ENCODE measurements at regions of chr12 and their contacts with region 1.

Region 1: DNA sequence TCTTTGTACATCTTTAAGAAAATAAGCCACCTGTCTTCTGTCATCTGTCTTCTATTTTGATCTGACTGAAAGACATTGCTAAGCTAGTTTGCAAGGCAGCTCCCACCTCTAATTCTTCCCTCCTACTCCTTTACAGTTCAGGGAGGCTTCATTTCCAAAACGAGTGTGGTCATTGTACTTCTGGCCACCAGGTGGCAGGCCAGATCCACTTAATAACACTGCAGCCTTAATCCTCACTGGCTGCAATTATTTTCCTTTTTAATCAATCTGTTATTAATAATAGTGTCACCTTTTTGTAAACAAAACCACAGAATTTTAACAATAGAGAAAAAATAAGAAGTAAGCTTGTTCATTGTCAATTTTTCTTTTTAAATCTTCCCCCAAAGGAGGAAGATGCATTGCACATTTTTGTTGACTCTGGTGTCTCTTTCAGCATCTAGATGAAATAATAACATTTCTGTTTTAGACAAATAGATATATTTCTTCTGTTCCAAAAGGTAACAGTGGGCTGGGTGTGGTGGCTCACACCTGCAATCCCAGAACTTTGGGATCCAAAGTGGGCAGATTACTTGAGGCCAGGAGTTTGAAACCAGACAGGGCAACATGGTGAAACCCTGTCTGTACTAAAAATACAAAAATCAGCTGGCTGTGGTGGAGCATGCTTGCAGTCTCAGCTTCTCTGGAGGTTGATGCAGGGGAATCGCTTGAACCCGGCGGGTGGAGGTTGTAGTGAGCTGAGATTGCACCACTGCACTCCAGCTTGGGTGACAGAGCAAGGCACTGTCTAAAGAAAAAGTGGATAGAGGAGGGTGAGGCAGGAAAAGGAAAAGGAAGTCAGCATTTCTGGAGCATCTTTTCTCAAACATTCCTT is 23.3 kb downstream of the GABARAPL1 start:
- DNase-seq: peak; percentile 79
- H3K4me3 ChIP-seq: no peak overlapping the region
- H3K27ac ChIP-seq: peak overlapping the region; percentile 35
- H3K4me1 ChIP-seq: peaks cover under 1% of the 10 kb centered on the region
- CTCF ChIP-seq: peak; percentile 99

Region 2: GRCh38 chr12:8969861-8970412 is 1266.1 kb before region 1 on chr12:
- CTCF ChIA-PET with region 1: no interaction called
- POLR2A ChIA-PET with region 1: no interaction called
- intact Hi-C with region 1: no loop called
- DNase-seq: no peak
- H3K4me3 ChIP-seq: no peak overlapping the region
- H3K27ac ChIP-seq: no peak overlapping the region
- H3K4me1 ChIP-seq: no peaks in the 10 kb centered on the region
- CTCF ChIP-seq: no peak

Region 3: GRCh38 chr12:10331642-10332239 is 95.7 kb after region 1 on chr12:
- CTCF ChIA-PET with region 1: no interaction called
- POLR2A ChIA-PET with region 1: no interaction called
- intact Hi-C with region 1: loop called (anchors 2 kb)
- DNase-seq: peak; percentile 78
- H3K4me3 ChIP-seq: no peak overlapping the region
- H3K27ac ChIP-seq: no peak overlapping the region
- H3K4me1 ChIP-seq: peaks cover 10% of the 10 kb centered on the region
- CTCF ChIP-seq: peak; percentile 96

Region 4: DNA sequence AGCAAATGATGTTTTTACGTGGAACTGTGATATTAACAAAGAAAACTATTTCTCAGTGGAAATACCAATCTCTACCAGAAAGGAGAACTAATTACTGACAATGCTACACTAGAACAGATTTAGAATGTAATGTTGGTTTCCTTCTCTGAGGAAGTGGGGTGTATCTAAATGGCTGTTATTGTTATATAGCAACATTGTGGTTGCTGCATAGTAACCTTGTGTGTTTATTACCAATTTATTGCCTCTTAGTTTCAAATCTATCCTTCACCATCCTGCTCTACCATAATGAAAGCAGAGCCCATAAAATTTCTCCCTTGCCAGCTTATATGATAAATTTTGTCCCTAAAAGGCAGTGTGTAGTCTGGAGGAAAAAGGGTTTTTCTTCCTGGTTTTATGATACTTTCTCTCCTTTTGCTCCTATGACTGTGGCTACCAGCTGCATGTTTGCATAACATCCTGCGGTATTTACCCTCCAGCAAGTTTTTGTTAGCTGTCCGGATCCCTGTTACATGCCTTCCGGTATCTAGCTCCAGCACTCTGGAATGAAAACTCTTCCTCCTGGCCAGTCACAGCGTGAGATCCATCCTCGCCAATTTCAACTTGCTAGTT is 159.5 kb after region 1 on chr12:
- CTCF ChIA-PET with region 1: no interaction called
- POLR2A ChIA-PET with region 1: interaction called, 5 read pairs
- intact Hi-C with region 1: loop called (anchors 2 kb)
- DNase-seq: peak; percentile 83
- H3K4me3 ChIP-seq: peak overlapping the region; percentile 79
- H3K27ac ChIP-seq: peak overlapping the region; percentile 97
- H3K4me1 ChIP-seq: peaks cover 74% of the 10 kb centered on the region
- CTCF ChIP-seq: no peak

Region 5: DNA sequence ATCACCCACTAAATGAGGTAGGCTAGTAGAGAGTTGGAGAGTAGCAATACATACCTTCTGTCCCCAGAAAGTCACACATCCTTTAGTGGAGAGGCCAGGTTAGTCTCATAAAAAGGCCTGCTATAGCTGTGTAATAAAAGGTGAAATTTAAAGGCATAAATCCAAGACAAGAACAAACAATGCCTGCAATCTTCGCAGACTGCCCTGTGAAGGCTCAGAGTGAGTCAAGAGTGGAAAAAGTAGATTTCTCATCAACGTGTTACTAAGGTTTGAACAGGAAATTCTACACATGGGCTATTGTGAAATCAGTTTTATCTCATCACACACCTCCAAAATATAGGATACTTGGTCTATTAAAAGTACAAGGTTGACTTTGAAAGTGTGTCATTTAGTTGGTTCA is 217.1 kb after region 1 on chr12 and contains the start of gene KLRC1:
- CTCF ChIA-PET with region 1: no interaction called
- POLR2A ChIA-PET with region 1: no interaction called
- intact Hi-C with region 1: no loop called
- DNase-seq: no peak
- H3K4me3 ChIP-seq: no peak within 1 kb of the TSS
- H3K27ac ChIP-seq: no peak within 1 kb of the TSS
- H3K4me1 ChIP-seq: peaks cover 9% of the 10 kb centered on the region
- CTCF ChIP-seq: no peak
- total RNA-seq, gene KLRC1: 1.2 TPM in 1 of 2 replicates, not detected in the other

Region 6: DNA sequence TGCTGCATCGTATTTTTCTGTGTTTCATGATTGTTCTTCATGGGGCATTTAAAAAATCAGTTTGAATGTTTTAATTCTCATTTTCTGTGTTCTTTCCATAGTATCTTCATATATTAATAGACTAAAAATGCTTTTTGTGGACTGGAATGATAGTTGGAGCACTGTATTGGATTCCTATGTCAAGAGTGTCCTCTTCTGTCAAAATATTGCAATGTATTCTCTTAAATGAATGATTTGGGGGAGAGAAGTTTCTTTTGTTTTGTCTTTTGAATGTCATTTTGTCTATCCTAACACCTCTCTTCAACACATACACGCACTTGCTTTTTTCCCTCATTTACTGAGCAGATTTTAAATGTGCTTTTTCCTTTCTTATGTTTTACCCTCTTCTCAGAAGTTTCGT is 265.0 kb after region 1 on chr12:
- CTCF ChIA-PET with region 1: no interaction called
- POLR2A ChIA-PET with region 1: no interaction called
- intact Hi-C with region 1: loop called (anchors 2 kb)
- DNase-seq: peak; percentile 33
- H3K4me3 ChIP-seq: no peak overlapping the region
- H3K27ac ChIP-seq: no peak overlapping the region
- H3K4me1 ChIP-seq: peaks cover 19% of the 10 kb centered on the region
- CTCF ChIP-seq: peak; percentile 72

Region 7: DNA sequence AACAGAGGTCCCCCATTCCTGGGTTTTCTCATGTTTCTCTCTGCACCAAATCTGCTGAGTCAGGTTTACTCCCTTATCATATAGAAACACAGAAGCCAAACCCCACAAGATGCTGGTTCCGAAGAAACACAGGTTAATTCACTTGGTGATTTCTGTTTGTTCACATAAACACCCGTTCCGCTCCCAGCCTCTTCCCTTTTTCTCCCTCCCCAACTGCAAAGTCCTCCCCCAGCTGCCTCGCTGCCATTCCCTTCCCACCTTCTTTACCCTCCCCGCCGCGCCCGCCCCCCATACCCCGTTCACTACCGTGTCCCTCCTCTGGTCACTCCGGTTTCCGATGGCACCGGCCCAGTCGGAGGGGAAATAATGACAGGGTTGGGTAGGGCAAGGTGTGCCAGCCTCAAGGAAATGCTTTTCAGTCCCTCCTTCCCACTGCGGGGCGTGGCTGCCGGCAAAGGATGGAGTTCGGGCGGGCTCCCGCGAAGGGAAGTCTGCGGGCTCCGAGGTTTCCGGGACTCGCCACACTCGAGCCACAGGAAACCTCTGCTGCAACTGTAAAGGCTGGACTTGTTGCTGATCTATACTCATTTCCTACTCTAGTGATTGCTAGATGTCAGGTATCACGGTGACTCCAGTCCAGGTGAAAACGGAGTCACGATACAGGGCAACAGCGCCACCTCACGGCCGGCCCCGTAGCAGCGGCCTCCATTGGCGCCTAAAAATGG is 437.8 kb after region 1 on chr12 and contains the start of gene STYK1:
- CTCF ChIA-PET with region 1: no interaction called
- POLR2A ChIA-PET with region 1: no interaction called
- intact Hi-C with region 1: loop called (anchors 2 kb)
- DNase-seq: peak; percentile 67
- H3K4me3 ChIP-seq: peak within 1 kb of the TSS; percentile 65
- H3K27ac ChIP-seq: no peak within 1 kb of the TSS
- H3K4me1 ChIP-seq: peaks cover 21% of the 10 kb centered on the region
- CTCF ChIP-seq: peak; percentile 92
- total RNA-seq, gene STYK1: not detected in 2 replicates